CD14-positive monocyte (primary cell): ENCODE measurements at regions of chr19 and their contacts with region 1.

Region 1: GRCh38 chr19:43595999-43596841 is at the starts of genes IRGQ and ZNF576:
- DNase-seq: peak; percentile 100
- H3K4me3 ChIP-seq: peak within 1 kb of the TSS; percentile 71 to 91 (median 73)
- H3K4me3 Mint-ChIP-seq: peak within 1 kb of the TSS; percentile 98
- H3K27ac ChIP-seq: peak within 1 kb of the TSS; percentile 93 to 99
- H3K27ac Mint-ChIP-seq: peak within 1 kb of the TSS; percentile 98 to 100 (median 99)
- H3K4me1 ChIP-seq: peaks cover 31 to 35% of the 10 kb centered on the region in 2 donors
- H3K4me1 Mint-ChIP-seq: peaks cover 27% of the 10 kb centered on the region
- H3K27me3 ChIP-seq: no peaks in the 10 kb centered on the region
- H3K27me3 Mint-ChIP-seq: no peaks in the 10 kb centered on the region
- CTCF ChIP-seq: no peak
- polyA plus RNA-seq, gene IRGQ: 1.8 to 49.6 (median 2.9) TPM
- polyA plus RNA-seq, gene ZNF576: 3.6 to 8.4 (median 7.2) TPM

Region 2: DNA sequence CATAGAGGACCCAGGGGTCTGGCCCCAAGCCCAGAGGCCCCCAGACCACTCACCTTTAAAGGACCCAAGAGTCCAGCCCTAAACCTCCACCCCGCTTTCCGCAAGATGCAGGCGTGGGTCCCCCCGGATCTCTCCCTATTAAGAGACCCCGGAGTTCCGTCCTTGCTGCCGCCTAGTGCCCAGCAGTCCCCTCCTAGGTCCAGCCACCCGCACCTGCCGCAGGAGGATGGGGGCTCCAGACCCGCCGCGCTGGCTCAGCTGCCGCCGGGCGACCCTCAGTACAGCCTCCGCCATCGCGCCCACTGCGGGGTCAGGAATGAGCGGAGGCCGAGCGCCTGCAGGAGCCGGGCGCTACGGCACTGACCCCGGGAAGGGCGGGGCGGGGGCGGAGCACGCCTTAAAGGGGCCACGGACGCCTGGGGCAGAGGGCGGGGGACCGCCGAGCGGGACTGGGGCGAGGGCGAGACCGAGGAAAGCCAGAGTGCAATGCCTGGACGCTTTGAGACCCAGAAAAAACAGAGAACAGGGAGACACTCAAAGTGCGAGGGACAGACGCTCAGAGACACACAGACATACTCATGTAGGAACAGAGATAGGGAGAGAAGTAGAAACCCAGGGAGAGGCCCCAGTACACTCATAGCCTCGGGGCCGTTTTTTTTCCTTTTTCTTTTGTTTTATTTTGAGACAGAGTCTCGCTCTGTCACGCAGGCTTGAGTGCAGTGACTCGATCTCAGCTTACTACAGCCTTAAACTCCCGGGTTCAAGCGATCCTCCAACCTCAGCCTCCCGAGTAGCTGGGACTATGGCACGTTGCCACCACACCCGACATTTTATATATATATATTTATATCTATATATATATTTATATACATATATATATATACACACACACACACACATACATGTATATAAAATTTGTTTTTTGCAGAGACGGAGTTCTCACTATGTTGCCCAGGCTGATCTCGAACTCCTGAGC is 69.0 kb before region 1 on chr19 and contains the start of gene ETHE1:
- intact Hi-C with region 1: loop called (anchors 2 to 10 kb)
- DNase-seq: peak; percentile 45 to 68 (median 59)
- H3K4me3 ChIP-seq: peak within 1 kb of the TSS; percentile 44 to 98 (median 91)
- H3K4me3 Mint-ChIP-seq: peak within 1 kb of the TSS; percentile 90 to 98
- H3K27ac ChIP-seq: peak within 1 kb of the TSS; percentile 60 to 89
- H3K27ac Mint-ChIP-seq: peak within 1 kb of the TSS; percentile 81 to 97 (median 92)
- H3K4me1 ChIP-seq: peaks cover 27 to 40% of the 10 kb centered on the region in 2 donors
- H3K4me1 Mint-ChIP-seq: peaks cover 34% of the 10 kb centered on the region
- H3K27me3 ChIP-seq: no peaks in the 10 kb centered on the region
- H3K27me3 Mint-ChIP-seq: peaks cover 0 to 2% (median 1%) of the 10 kb centered on the region in 3 donors
- CTCF ChIP-seq: no peak
- polyA plus RNA-seq, gene ETHE1: 71.2 to 135 (median 111) TPM

Region 3: GRCh38 chr19:43532962-43533545 is 63.2 kb before region 1 on chr19 and contains the start of gene ZNF575:
- intact Hi-C with region 1: loop called (anchors 1 to 10 kb)
- DNase-seq: peak; percentile 64 to 79 (median 66)
- H3K4me3 ChIP-seq: peak within 1 kb of the TSS; percentile 56 to 96 (median 62)
- H3K4me3 Mint-ChIP-seq: peak within 1 kb of the TSS; percentile 97
- H3K27ac ChIP-seq: peak within 1 kb of the TSS; percentile 71 to 84
- H3K27ac Mint-ChIP-seq: peak within 1 kb of the TSS; percentile 93 to 98 (median 97)
- H3K4me1 ChIP-seq: peaks cover 16 to 22% of the 10 kb centered on the region in 2 donors
- H3K4me1 Mint-ChIP-seq: peaks cover 25% of the 10 kb centered on the region
- H3K27me3 ChIP-seq: no peaks in the 10 kb centered on the region
- H3K27me3 Mint-ChIP-seq: peaks cover 0 to 5% (median 0%) of the 10 kb centered on the region in 3 donors
- CTCF ChIP-seq: no peak
- polyA plus RNA-seq, gene ZNF575: 0.25 to 0.79 (median 0.29) TPM

Region 4: GRCh38 chr19:43555185-43555770 is 40.9 kb before region 1 on chr19:
- intact Hi-C with region 1: loop called (anchors 2 kb)
- DNase-seq: peak; percentile 64 to 79 (median 66)
- H3K4me3 ChIP-seq: no peak overlapping the region
- H3K4me3 Mint-ChIP-seq: no peak overlapping the region
- H3K27ac ChIP-seq: no peak overlapping the region
- H3K27ac Mint-ChIP-seq: peak overlapping the region in 3 of 7 donors; percentile 14 to 78 (median 77)
- H3K4me1 ChIP-seq: no peaks in the 10 kb centered on the region
- H3K4me1 Mint-ChIP-seq: peaks cover under 1% of the 10 kb centered on the region
- H3K27me3 ChIP-seq: no peaks in the 10 kb centered on the region
- H3K27me3 Mint-ChIP-seq: peaks cover 0 to 3% (median 0%) of the 10 kb centered on the region in 3 donors
- CTCF ChIP-seq: peak; percentile 90

Region 5: DNA sequence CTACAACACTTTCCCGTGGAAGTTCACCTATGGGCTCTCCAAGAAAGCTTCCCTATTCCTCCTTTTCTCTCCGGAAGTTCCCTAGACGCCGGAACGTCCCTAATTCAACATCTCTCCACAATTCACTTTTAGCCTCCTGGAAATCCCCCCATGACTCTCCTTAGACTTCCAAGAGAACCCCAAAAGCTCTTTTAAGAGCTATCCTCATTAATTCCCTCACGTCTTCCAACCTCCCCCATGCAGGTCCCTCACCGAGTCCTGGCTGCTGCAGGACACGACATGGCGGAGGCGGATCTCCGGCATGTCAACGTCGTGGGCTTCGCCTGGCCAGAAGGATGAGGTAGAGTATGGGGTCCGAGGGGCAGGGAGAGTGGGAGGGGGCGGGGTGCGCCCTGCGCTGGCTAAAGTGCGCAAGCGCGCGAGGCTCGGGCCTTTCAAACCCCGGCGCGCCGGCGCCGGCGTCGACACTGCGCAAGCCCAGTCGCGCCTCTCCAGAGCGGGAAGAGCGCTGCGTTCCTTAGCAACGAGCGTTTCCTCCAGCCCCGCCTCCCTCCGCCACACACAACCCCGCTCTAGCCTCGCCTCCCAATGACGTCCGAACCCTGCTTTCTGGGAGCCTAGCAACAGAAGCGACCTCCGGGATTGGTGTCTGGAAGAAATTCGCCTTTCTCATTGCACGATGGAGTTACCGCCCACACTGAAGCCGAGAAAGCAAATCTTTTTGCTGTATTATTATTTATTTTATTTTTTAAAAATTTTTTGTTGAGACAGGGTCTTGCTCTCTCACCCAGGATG is 20.9 kb before region 1 on chr19 and contains the starts of genes PINLYP and XRCC1:
- intact Hi-C with region 1: loop called (anchors 1 kb)
- DNase-seq: peak; percentile 99
- H3K4me3 ChIP-seq: peak within 1 kb of the TSS; percentile 72 to 89 (median 87)
- H3K4me3 Mint-ChIP-seq: peak within 1 kb of the TSS; percentile 87 to 96
- H3K27ac ChIP-seq: peak within 1 kb of the TSS; percentile 71 to 96
- H3K27ac Mint-ChIP-seq: peak within 1 kb of the TSS; percentile 95 to 98 (median 97)
- H3K4me1 ChIP-seq: peaks cover 25 to 28% of the 10 kb centered on the region in 2 donors
- H3K4me1 Mint-ChIP-seq: peaks cover 33% of the 10 kb centered on the region
- H3K27me3 ChIP-seq: no peaks in the 10 kb centered on the region
- H3K27me3 Mint-ChIP-seq: peaks cover 0 to 4% (median 0%) of the 10 kb centered on the region in 3 donors
- CTCF ChIP-seq: no peak
- polyA plus RNA-seq, gene PINLYP: 0.83 to 1.3 (median 0.93) TPM
- polyA plus RNA-seq, gene XRCC1: 13.1 to 23.0 (median 19.3) TPM

Region 6: GRCh38 chr19:43619262-43620060 is 23.2 kb after region 1 on chr19 and contains the start of gene ZNF428:
- intact Hi-C with region 1: loop called in 1 of 2 experiments (anchors 2 kb)
- DNase-seq: peak; percentile 67 to 84 (median 82)
- H3K4me3 ChIP-seq: peak within 1 kb of the TSS; percentile 66 to 84 (median 68)
- H3K4me3 Mint-ChIP-seq: peak within 1 kb of the TSS; percentile 92 to 96
- H3K27ac ChIP-seq: peak within 1 kb of the TSS; percentile 78 to 89
- H3K27ac Mint-ChIP-seq: peak within 1 kb of the TSS; percentile 87 to 96 (median 93)
- H3K4me1 ChIP-seq: peaks cover 16 to 17% of the 10 kb centered on the region in 2 donors
- H3K4me1 Mint-ChIP-seq: peaks cover 15% of the 10 kb centered on the region
- H3K27me3 ChIP-seq: no peaks in the 10 kb centered on the region
- H3K27me3 Mint-ChIP-seq: peaks cover 0 to 8% (median 3%) of the 10 kb centered on the region in 3 donors
- CTCF ChIP-seq: no peak
- polyA plus RNA-seq, gene ZNF428: 3.8 to 5.6 (median 3.9) TPM

Region 7: GRCh38 chr19:43668406-43669158 is 72.4 kb after region 1 on chr19:
- intact Hi-C with region 1: no loop called
- DNase-seq: peak; percentile 98 to 99 (median 98)
- H3K4me3 ChIP-seq: peak overlapping the region; percentile 68 to 99 (median 83)
- H3K4me3 Mint-ChIP-seq: peak overlapping the region; percentile 100
- H3K27ac ChIP-seq: peak overlapping the region; percentile 82 to 90
- H3K27ac Mint-ChIP-seq: peak overlapping the region; percentile 99 to 100 (median 99)
- H3K4me1 ChIP-seq: peaks cover 68 to 81% of the 10 kb centered on the region in 2 donors
- H3K4me1 Mint-ChIP-seq: peaks cover 66% of the 10 kb centered on the region
- H3K27me3 ChIP-seq: no peaks in the 10 kb centered on the region
- H3K27me3 Mint-ChIP-seq: peaks cover 0 to 2% (median 2%) of the 10 kb centered on the region in 3 donors
- CTCF ChIP-seq: no peak

Region 8: GRCh38 chr19:43678512-43679261 is 82.5 kb after region 1 on chr19:
- intact Hi-C with region 1: no loop called
- DNase-seq: no peak
- H3K4me3 ChIP-seq: no peak overlapping the region
- H3K4me3 Mint-ChIP-seq: no peak overlapping the region
- H3K27ac ChIP-seq: no peak overlapping the region
- H3K27ac Mint-ChIP-seq: no peak overlapping the region
- H3K4me1 ChIP-seq: peaks cover 44 to 51% of the 10 kb centered on the region in 2 donors
- H3K4me1 Mint-ChIP-seq: peaks cover 46% of the 10 kb centered on the region
- H3K27me3 ChIP-seq: no peaks in the 10 kb centered on the region
- H3K27me3 Mint-ChIP-seq: peaks cover 0 to 5% (median 0%) of the 10 kb centered on the region in 3 donors
- CTCF ChIP-seq: no peak